ENCODE measurements at regions of chr15 and their contacts with region 1.

Region 1: DNA sequence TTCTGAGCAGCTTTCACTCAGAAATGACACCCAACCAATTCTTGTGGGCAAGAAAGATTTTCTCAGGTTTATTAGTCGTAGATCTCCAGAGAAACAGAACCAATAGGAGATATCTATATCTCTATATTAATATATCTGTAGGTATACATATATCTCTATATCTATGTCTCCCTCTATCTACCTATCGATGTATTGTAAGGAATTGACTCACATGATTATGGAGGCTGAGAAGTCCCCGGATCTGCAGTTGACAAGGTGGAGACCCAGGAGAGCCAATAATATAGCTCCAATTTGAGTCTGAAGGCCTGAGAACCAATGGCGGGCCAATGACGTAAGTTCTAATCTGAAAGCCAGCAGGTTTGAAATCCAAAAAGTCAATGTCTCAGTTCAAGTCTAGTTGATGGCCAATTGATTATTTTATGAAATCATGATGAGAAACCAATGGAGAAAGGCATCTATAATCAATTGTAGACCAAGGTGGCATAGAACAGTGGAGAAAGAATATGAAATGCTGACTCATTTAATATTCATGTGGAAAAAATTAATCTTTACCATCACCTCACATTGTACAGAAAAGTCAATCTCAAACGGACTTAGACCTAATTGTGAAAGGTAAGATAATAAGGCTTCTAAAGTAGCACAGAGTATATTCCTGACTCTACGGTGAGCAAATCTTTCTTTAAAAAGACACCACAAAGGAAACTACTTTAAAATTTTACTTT is 65.6 kb upstream of the CHRNA7 start:
- DNase-seq: no peak
- ATAC-seq: no peak
- H3K4me3 ChIP-seq: no peak overlapping the region
- H3K27ac ChIP-seq: no peak overlapping the region
- H3K4me1 ChIP-seq: no peaks in the 10 kb centered on the region
- H3K27me3 ChIP-seq: peaks cover 0 to 43% (median 20%) of the 10 kb centered on the region in 7 donors
- CTCF ChIP-seq: no peak

Region 2: GRCh38 chr15:31887246-31887645 is 77.5 kb before region 1 on chr15:
- intact Hi-C with region 1: loop called in 1 of 10 experiments (anchors 10 kb)
- DNase-seq: no peak
- ATAC-seq: no peak
- H3K4me3 ChIP-seq: no peak overlapping the region
- H3K27ac ChIP-seq: no peak overlapping the region
- H3K4me1 ChIP-seq: no peaks in the 10 kb centered on the region
- H3K27me3 ChIP-seq: peaks cover 0 to 31% (median 22%) of the 10 kb centered on the region in 7 donors
- CTCF ChIP-seq: no peak

Region 3: DNA sequence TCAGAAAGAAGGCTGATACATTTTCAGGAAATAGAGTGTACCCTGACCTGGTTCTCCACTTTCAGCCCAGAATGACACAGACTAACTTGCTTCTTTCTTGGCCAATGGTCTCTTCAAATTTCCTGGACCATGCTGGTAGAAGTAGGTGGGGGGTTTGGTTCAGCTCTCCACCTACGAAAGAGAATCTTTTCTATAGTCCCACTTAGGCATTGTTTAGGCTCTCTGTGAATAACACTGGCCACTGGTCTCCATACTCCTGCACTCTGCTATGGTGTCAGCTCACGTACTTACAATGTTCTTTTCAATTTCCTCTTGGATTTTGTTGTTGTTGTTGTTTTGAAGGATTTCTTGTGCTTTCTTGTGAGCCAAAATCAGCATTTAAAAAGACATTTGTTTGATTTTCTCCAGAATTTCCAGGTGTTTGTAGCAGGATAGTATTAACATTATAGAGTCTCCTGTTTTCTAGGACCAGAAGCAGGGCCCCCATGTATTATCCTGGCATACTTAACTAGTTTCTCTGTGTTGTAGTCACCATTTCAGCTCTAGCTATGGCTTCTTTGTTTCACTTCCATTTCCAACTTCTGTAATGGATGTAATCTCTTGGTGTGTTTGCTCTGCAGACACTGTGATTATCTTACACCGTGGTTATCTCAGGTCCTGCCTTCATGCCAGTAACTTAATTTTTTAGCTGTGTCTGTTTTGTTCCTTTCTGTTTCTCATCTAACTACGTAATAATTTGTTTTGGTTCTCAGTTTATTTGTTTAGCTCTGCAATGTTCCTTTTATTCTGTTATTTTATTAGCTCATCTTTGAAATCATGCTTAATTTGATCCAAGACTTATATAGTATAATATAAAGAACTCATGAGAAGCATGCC is 127.0 kb after region 1 on chr15:
- intact Hi-C with region 1: no loop called
- DNase-seq: no peak
- ATAC-seq: no peak
- H3K4me3 ChIP-seq: no peak overlapping the region
- H3K27ac ChIP-seq: no peak overlapping the region
- H3K4me1 ChIP-seq: no peaks in the 10 kb centered on the region
- H3K27me3 ChIP-seq: peaks cover 0 to 7% (median 0%) of the 10 kb centered on the region in 7 donors
- CTCF ChIP-seq: no peak